ENCODE measurements at regions of chr11 and their contacts with region 1.

Region 1: GRCh38 chr11:118295834-118296454 is 8.6 kb upstream of the CD3E start:
- DNase-seq: no peak
- H3K4me3 ChIP-seq: no peak overlapping the region
- H3K27ac ChIP-seq: no peak overlapping the region
- H3K4me1 ChIP-seq: no peaks in the 10 kb centered on the region; a peak in 1 of 7 replicates
- H3K27me3 ChIP-seq: no peaks in the 10 kb centered on the region; a peak in 1 of 7 replicates
- CTCF ChIP-seq: peak in 2 of 3 experiments; percentile 63 to 70; a peak in 3 of 4 replicates
- EP300 ChIP-seq: no peak
- POLR2A ChIP-seq: no peak
- RAD21 ChIP-seq: peak; percentile 54 to 65

Region 2: DNA sequence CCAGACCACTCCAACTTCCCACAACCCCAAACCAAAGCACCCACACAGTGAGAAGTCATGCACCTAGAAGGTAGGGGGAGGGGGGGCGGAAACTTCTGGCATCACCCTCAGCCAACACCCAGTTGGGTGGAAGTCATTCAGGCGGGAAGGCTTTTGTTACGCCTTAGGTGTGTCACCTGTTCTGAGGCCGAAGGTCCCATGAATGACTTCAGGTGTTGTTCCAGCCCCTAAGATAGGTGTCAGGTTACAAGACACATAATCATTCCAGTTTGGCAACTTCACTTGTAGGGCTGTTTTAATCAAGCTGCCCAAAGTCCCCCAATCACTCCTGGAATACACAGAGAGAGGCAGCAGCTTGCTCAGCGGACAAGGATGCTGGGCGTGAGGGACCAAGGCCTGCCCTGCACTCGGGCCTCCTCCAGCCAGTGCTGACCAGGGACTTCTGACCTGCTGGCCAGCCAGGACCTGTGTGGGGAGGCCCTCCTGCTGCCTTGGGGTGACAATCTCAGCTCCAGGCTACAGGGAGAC is 219.1 kb before region 1 on chr11 and contains the start of gene TMPRSS4:
- CTCF ChIA-PET with region 1: no interaction called
- POLR2A ChIA-PET with region 1: no interaction called
- DNase-seq: no peak
- H3K4me3 ChIP-seq: no peak within 1 kb of the TSS
- H3K27ac ChIP-seq: no peak within 1 kb of the TSS
- H3K4me1 ChIP-seq: peaks cover 0 to 8% (median 4%) of the 10 kb centered on the region in 4 experiments; a peak in 5 of 7 replicates
- H3K27me3 ChIP-seq: no peaks in the 10 kb centered on the region; a peak in 1 of 7 replicates
- CTCF ChIP-seq: no peak
- EP300 ChIP-seq: no peak
- POLR2A ChIP-seq: no peak
- RAD21 ChIP-seq: no peak
- total RNA-seq, gene TMPRSS4: 0.58 and 0.69 TPM in 2 replicates

Region 3: DNA sequence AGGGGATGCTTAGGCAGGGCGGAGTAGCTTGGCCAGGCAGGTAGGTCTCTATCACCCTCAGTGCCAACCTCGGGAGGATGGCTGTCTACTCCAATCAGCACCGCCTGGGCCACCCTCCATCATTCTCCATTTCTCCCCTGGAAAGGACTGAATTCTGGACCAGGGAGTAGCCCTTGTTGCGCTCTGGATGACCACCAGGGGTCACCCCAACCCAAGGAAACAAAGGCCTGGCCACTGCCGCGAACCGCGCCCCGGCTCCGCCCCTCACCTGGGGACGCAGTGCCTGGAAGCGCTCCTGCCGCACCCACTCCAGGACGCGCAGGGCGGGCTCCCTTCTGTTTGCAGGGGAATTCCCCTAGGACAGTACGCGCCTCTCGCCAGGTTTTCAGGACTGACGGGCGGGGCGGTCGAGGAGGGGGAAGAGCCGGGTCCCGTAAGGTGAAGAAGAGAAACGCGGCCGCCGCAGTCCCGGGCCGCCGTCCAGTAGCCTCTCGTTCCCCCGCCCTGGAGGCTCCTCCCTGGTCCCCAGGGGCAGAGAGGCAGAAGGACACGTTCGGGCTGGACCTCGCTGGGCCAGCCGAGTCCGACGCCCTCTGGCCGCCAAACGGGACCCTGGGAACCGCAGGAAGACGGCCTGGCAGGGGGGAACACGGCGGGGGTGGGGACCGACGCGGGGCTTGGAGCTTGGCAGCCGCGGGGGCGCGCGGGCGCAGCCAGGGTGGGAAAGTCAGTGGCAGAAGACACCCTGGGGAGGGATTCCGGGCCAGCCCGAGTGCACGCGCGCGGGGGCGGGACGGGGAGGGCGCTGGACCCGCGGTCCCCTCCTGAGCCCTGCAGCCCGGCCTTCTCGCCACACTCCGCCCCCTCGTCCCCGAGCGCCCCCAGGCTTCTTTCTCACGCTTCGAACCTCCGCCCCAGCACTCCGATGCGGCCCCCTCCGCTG is 150.4 kb before region 1 on chr11:
- CTCF ChIA-PET with region 1: interaction called, 12 read pairs
- POLR2A ChIA-PET with region 1: no interaction called
- DNase-seq: peak; percentile 66 to 97
- H3K4me3 ChIP-seq: peak overlapping the region; percentile 34 to 70 (median 53)
- H3K27ac ChIP-seq: no peak overlapping the region
- H3K4me1 ChIP-seq: peaks cover 0 to 21% (median 7%) of the 10 kb centered on the region in 4 experiments; a peak in 6 of 7 replicates
- H3K27me3 ChIP-seq: peaks cover 0 to 31% (median 17%) of the 10 kb centered on the region in 4 experiments; a peak in 6 of 7 replicates
- CTCF ChIP-seq: peak; percentile 75 to 90 (median 90)
- EP300 ChIP-seq: no peak
- POLR2A ChIP-seq: no peak
- RAD21 ChIP-seq: peak; percentile 97 to 99

Region 4: GRCh38 chr11:118198370-118198769 is 97.6 kb before region 1 on chr11:
- CTCF ChIA-PET with region 1: interaction called, 37 read pairs
- POLR2A ChIA-PET with region 1: no interaction called
- DNase-seq: peak; percentile 33 to 85
- H3K4me3 ChIP-seq: no peak overlapping the region
- H3K27ac ChIP-seq: no peak overlapping the region
- H3K4me1 ChIP-seq: peaks cover 2 to 14% (median 4%) of the 10 kb centered on the region in 4 experiments; a peak in 5 of 7 replicates
- H3K27me3 ChIP-seq: no peaks in the 10 kb centered on the region
- CTCF ChIP-seq: peak; percentile 79 to 86 (median 79)
- EP300 ChIP-seq: no peak
- POLR2A ChIP-seq: no peak
- RAD21 ChIP-seq: peak; percentile 90 to 93

Region 5: DNA sequence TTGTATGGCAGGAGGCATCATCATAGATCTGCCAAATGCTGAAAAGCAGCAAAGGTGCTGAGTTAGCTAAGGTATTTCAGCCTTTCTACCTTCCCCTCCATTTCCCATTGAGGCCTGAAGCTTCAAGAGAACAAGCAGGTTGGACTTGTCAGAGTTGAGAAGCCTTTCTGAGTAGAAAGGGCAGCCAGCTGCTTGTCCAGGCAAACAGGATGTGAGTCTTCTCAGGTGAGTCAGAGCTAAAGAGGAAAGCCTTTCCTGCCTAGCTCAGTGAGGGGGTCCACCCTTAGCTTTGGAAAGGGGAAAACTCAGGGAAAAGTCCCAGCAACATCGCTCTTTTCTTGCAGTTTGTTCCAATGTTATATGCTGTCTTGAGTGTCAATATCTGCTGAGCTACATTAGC is 18.6 kb before region 1 on chr11:
- CTCF ChIA-PET with region 1: interaction called, 10 read pairs
- POLR2A ChIA-PET with region 1: no interaction called
- DNase-seq: no peak
- H3K4me3 ChIP-seq: no peak overlapping the region
- H3K27ac ChIP-seq: no peak overlapping the region
- H3K4me1 ChIP-seq: no peaks in the 10 kb centered on the region
- H3K27me3 ChIP-seq: no peaks in the 10 kb centered on the region
- CTCF ChIP-seq: no peak
- EP300 ChIP-seq: no peak
- POLR2A ChIP-seq: no peak
- RAD21 ChIP-seq: no peak

Region 6: GRCh38 chr11:118338637-118339061 is 42.7 kb after region 1 on chr11:
- CTCF ChIA-PET with region 1: interaction called, 12 read pairs
- POLR2A ChIA-PET with region 1: interaction called, 4 read pairs
- DNase-seq: no peak
- H3K4me3 ChIP-seq: no peak overlapping the region
- H3K27ac ChIP-seq: no peak overlapping the region
- H3K4me1 ChIP-seq: no peaks in the 10 kb centered on the region
- H3K27me3 ChIP-seq: no peaks in the 10 kb centered on the region; a peak in 1 of 7 replicates
- CTCF ChIP-seq: no peak
- EP300 ChIP-seq: no peak
- POLR2A ChIP-seq: no peak
- RAD21 ChIP-seq: no peak

Region 7: GRCh38 chr11:118366287-118366686 is 70.3 kb after region 1 on chr11:
- CTCF ChIA-PET with region 1: no interaction called
- POLR2A ChIA-PET with region 1: no interaction called
- DNase-seq: no peak
- H3K4me3 ChIP-seq: no peak overlapping the region
- H3K27ac ChIP-seq: no peak overlapping the region
- H3K4me1 ChIP-seq: no peaks in the 10 kb centered on the region
- H3K27me3 ChIP-seq: no peaks in the 10 kb centered on the region; a peak in 1 of 7 replicates
- CTCF ChIP-seq: no peak
- EP300 ChIP-seq: no peak
- POLR2A ChIP-seq: no peak
- RAD21 ChIP-seq: no peak

Region 8: DNA sequence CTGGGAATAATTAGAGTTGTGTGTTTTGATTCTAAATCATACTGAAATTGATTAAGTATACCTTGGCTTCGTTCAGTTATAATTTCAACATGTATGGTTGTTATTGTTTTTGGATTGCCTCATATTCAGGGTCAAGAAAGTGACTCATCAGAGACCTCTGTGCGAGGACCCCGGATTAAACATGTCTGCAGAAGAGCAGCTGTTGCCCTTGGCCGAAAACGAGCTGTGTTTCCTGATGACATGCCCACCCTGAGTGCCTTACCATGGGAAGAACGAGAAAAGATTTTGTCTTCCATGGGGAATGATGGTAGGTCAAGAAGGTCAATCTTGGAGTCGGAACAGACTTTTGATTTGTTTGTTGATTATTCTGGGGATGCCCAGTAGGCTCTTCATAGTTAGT is 180.7 kb after region 1 on chr11:
- CTCF ChIA-PET with region 1: no interaction called
- POLR2A ChIA-PET with region 1: no interaction called
- DNase-seq: no peak
- H3K4me3 ChIP-seq: no peak overlapping the region
- H3K27ac ChIP-seq: no peak overlapping the region
- H3K4me1 ChIP-seq: no peaks in the 10 kb centered on the region
- H3K27me3 ChIP-seq: no peaks in the 10 kb centered on the region
- CTCF ChIP-seq: no peak
- EP300 ChIP-seq: no peak
- POLR2A ChIP-seq: no peak
- RAD21 ChIP-seq: no peak

Region 9: GRCh38 chr11:118503216-118503615 is 207.3 kb after region 1 on chr11:
- CTCF ChIA-PET with region 1: no interaction called
- POLR2A ChIA-PET with region 1: no interaction called
- DNase-seq: no peak
- H3K4me3 ChIP-seq: no peak overlapping the region
- H3K27ac ChIP-seq: no peak overlapping the region
- H3K4me1 ChIP-seq: no peaks in the 10 kb centered on the region
- H3K27me3 ChIP-seq: no peaks in the 10 kb centered on the region
- CTCF ChIP-seq: no peak
- EP300 ChIP-seq: no peak
- POLR2A ChIP-seq: no peak
- RAD21 ChIP-seq: no peak

Measured in H1 (cell line).